ENCODE measurements at regions of chr6 and their contacts with region 1.

Region 1: DNA sequence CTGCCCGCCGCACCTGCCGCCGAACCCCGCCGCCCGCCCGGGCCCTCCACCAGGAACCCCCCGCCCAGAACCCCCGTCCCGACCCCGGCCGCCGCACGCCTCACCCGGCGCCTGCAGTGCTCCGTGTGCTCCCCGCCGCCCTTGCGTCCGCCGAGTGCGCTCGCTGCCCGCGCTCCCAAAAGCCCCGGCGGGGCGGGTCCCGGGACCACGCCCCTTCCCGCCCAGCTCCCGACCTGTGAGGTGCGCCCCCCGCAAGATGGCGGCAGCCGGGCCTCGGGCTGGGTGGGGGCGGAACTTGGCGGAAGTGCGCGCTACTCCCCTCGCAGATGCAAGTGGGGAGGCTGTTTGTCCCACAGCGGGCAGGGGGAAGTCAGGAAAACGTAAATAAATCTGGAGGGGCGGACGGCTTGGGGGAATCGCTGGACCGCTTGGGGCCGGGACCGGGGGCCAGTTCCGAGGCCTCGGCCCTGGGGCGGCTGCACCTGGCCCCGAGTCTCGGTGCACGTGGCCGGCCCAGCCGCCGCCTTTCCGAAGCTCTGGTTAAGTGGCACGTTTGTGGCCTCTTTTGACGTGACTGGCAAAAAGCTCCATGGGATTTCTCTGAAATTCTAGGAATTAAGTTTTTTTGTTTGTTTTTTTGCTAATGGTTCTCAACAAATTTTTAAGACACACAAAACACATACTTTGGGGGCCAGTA is at the start of gene EZR:
- DNase-seq: peak; percentile 87 to 94 (median 93)
- ATAC-seq: peak; percentile 79 to 84
- H3K4me3 ChIP-seq: peak within 1 kb of the TSS; percentile 94
- H3K27ac ChIP-seq: peak within 1 kb of the TSS; percentile 87
- H3K4me1 ChIP-seq: no peaks in the 10 kb centered on the region
- H3K27me3 ChIP-seq: no peaks in the 10 kb centered on the region
- total RNA-seq, gene EZR: 192 to 261 (median 244) TPM

Region 2: GRCh38 chr6:158704181-158704822 is 115.1 kb before region 1 on chr6:
- intact Hi-C with region 1: loop called in 3 of 4 experiments (anchors 10 kb)
- DNase-seq: peak; percentile 88 to 95 (median 95)
- ATAC-seq: peak; percentile 89 to 90
- H3K4me3 ChIP-seq: peak overlapping the region; percentile 15
- H3K27ac ChIP-seq: peak overlapping the region; percentile 3
- H3K4me1 ChIP-seq: peaks cover 10% of the 10 kb centered on the region
- H3K27me3 ChIP-seq: no peaks in the 10 kb centered on the region

Measured in right cardiac atrium (tissue), 5 donors.